Motor neuron (in vitro differentiated cells): ENCODE measurements at regions of chr22 and their contacts with region 1.

Region 1: DNA sequence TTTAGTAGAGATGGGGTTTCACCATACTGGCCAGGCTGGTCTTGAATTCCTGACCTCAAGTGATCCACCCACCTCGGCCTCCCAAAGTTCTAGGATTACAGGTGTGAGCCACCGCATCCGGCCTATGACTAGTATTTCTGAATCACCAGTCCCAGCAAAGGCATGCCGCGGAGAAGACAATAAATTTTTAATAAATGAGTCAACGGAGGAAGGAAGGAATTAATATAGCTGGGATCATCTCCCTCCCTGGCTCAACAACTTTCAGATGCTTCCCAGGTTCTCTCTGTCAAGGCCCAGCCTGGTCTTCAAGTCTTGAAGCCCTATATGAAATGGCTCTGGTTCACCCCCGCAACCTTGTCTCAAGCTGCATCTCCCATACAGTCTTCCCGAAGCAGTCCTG is 45.7 kb downstream of the CYTH4 start:
- ATAC-seq: no peak
- H3K4me3 ChIP-seq: no peak overlapping the region
- H3K27ac ChIP-seq: no peak overlapping the region
- H3K4me1 ChIP-seq: peaks cover 29 to 46% of the 10 kb centered on the region in 2 donors

Region 2: DNA sequence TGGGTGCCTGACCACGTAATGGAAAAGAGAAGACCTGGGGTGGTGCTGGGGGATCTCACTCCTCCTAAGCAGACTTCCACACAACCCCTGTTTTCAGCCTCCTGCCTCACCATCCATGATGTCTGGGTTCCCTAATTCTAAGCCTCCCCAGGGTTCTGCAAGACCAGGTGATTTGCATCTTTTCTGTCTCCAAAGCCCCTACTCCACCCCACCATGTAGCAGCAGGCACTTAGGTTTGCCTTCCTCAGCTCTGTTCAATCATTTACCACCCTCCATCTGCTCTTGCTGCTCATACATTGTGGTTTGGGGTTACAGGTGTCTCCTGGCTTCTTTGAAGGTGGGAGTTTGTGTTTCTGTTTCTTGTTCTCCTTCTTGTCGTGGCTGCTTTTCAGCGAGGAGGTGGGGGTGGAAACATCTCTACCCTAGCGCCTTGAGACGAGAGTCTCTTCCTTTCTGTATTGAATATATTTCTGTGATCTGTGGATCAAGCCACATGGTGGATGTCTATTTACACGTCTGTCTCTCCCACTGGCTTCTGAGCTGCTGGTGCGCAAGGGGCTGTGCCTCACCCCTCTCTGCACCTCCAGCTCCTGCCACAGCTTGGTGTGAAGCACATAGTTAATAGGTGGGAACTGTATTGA is 109.1 kb before region 1 on chr22:
- in situ Hi-C with region 1: no loop called
- ATAC-seq: no peak
- H3K4me3 ChIP-seq: no peak overlapping the region
- H3K27ac ChIP-seq: no peak overlapping the region
- H3K4me1 ChIP-seq: peaks cover 9 to 10% of the 10 kb centered on the region in 2 donors

Region 3: GRCh38 chr22:37229805-37230672 is 98.0 kb before region 1 on chr22:
- in situ Hi-C with region 1: no loop called
- ATAC-seq: peak in 4 of 8 experiments; percentile 20 to 77 (median 50)
- H3K4me3 ChIP-seq: no peak overlapping the region
- H3K27ac ChIP-seq: no peak overlapping the region
- H3K4me1 ChIP-seq: peaks cover 0 to 15% of the 10 kb centered on the region in 2 donors

Region 4: GRCh38 chr22:37457093-37457893 is 129.3 kb after region 1 on chr22:
- in situ Hi-C with region 1: loop called in 1 of 9 experiments (anchors 10 kb)
- ATAC-seq: peak; percentile 66 to 99 (median 77)
- H3K4me3 ChIP-seq: no peak overlapping the region
- H3K27ac ChIP-seq: no peak overlapping the region
- H3K4me1 ChIP-seq: peaks cover 27 to 28% of the 10 kb centered on the region in 2 donors